Activated naive CD4-positive, alpha-beta T cell treated with anti-CD3 and anti-CD28 coated beads for 36 hours (primary cell): ENCODE measurements at regions of chr19 and their contacts with region 1.

Region 1: GRCh38 chr19:55339048-55339888 is at the start of gene KMT5C:
- DNase-seq: peak; percentile 100
- H3K4me3 Mint-ChIP-seq: peak within 1 kb of the TSS; percentile 90
- H3K27ac Mint-ChIP-seq: peak within 1 kb of the TSS; percentile 92
- H3K4me1 Mint-ChIP-seq: peaks cover 12% of the 10 kb centered on the region
- H3K27me3 Mint-ChIP-seq: no peaks in the 10 kb centered on the region
- total RNA-seq, gene KMT5C: 45.9 to 47.1 TPM

Region 2: GRCh38 chr19:55062734-55063492 is 276.4 kb before region 1 on chr19 and contains the start of gene RDH13:
- CTCF ChIA-PET with region 1: no interaction called
- intact Hi-C with region 1: loop called (anchors 1 kb)
- DNase-seq: peak; percentile 99
- H3K4me3 Mint-ChIP-seq: peak within 1 kb of the TSS; percentile 84
- H3K27ac Mint-ChIP-seq: no peak within 1 kb of the TSS
- H3K4me1 Mint-ChIP-seq: peaks cover 18% of the 10 kb centered on the region
- H3K27me3 Mint-ChIP-seq: peaks cover 24% of the 10 kb centered on the region
- total RNA-seq, gene RDH13: 8.7 to 8.9 TPM

Region 3: DNA sequence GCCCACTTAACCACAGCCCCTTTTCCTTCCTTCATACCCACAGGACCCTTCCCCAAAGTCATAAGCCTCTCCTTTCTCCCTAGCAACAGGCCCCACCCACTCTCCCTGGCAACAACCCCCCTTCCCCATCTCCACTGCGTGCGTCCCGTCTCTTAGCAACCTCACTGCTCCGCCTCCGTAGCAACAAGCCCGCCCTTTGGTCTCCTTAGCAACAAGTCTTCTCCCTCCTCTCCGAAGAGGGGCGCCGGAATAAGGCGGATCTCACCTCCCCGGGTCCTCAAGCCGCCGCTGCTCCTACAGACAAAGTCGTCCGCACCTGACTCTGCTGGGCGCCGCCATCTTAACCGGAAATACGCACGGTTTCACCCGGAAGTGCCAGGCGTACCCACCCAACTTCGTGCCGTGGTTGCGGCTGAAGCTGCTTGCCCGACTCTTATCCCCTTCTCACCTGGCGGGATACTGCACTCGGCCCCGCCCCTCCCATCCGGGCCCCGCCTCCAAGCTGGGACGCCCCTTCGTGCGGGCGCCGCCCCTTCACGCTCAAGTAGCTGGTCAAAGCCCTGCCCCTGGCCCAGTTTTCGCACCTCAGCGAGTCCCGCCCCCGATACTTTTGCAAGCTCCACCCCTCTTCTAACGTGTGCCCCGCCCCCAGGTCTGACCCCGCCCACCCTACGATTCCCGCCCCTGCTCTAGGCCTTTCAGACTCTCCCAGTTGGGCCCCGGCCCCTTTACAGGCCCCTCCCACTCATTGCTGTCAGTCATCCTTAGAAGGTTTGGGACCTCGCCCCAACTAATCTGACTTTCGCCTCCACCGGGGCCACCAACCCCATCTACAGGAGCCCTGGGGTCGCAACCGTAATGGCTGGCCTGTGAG is 59.3 kb before region 1 on chr19 and contains the start of gene HSPBP1:
- CTCF ChIA-PET with region 1: interaction called, 3 read pairs
- intact Hi-C with region 1: loop called (anchors 1 kb)
- DNase-seq: peak; percentile 97
- H3K4me3 Mint-ChIP-seq: peak within 1 kb of the TSS; percentile 100
- H3K27ac Mint-ChIP-seq: peak within 1 kb of the TSS; percentile 93
- H3K4me1 Mint-ChIP-seq: peaks cover 28% of the 10 kb centered on the region
- H3K27me3 Mint-ChIP-seq: no peaks in the 10 kb centered on the region
- total RNA-seq, gene HSPBP1: 44.3 to 45.0 TPM

Region 4: DNA sequence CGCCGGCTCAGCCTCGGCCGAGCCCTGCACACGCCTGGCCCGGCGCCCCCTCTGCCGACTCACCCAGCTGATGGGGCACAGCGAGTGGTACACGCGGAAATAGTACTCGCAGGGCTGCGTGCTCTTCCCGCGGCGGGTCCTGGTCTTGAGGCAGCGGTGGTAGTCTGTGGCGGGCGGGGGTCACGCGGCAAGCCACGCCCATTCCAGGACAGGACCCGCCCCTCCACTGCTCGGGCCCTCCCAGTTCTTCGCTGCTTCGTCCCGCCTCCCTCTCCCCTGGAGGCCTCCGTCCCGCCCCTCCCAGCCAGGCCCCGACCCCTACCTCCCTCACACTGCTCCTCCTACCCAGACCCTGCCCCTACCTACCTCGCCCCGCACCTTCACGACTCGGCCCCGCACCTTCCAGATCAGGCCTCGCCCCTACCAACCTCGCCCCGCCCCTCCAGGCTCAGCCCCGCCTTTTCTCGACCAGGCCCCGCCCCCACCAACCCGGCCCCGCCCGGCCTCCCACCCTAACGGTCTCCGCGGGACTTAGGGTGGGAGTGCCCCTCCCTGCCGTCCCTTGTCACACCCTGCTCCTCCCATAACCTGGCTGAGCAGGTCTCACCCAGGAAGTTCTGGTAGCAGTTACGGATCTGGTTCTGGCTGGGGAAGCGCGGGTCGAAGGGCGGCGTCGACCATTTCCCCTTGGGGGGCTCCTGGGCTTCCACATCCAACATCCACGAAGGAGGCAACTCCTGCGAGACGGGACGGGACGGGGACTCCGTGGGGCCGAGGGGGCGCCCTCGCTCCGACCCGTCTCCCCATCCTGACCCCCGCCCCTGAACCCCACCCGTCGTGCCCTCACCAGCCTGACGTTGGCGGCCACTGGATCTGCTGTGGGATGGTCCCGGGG is 14.8 kb after region 1 on chr19:
- CTCF ChIA-PET with region 1: interaction called, 3 read pairs
- intact Hi-C with region 1: loop called (anchors 1 kb)
- DNase-seq: peak; percentile 76
- H3K4me3 Mint-ChIP-seq: peak overlapping the region; percentile 73
- H3K27ac Mint-ChIP-seq: no peak overlapping the region
- H3K4me1 Mint-ChIP-seq: peaks cover 15% of the 10 kb centered on the region
- H3K27me3 Mint-ChIP-seq: peaks cover 49% of the 10 kb centered on the region

Region 5: DNA sequence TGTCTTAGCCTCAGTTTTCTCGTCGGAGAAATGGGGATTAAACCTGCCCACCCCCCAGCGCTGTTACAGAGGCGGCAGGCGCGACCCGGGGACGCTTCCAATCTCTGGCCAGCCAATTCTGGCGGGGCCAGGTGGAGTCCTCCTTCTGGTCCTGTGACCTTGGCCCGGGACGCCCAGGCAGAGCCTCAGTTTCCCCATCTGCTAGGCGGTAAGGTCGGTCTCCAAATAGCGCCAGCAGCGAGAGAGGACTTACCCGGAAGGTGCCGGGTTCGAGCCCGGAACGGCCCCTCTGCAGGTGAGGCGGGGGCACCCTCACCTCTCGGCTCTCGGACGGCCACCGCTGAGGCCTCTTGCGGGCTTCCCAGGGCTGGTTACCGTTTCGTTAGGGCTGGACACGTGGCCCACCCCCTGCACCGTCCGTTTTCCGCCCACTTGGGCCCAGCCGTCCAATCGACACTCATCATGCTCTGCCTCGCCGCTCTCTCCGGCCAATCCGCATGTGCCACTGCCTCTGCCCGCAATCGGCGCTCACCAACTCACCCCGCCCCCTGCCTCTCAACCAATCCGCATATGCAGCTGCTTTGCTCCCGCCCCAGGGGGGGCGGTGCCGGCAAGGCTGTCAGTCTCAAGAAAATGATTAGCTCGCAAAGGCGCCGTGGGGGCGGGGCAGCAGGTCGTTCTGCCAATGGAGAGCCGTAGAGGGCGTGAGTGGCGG is 122.1 kb after region 1 on chr19 and contains the start of gene ISOC2:
- CTCF ChIA-PET with region 1: no interaction called
- intact Hi-C with region 1: loop called (anchors 1 kb)
- DNase-seq: peak; percentile 100
- H3K4me3 Mint-ChIP-seq: peak within 1 kb of the TSS; percentile 93
- H3K27ac Mint-ChIP-seq: peak within 1 kb of the TSS; percentile 77
- H3K4me1 Mint-ChIP-seq: peaks cover 20% of the 10 kb centered on the region
- H3K27me3 Mint-ChIP-seq: no peaks in the 10 kb centered on the region
- total RNA-seq, gene ISOC2: 18.6 to 20.5 TPM

Region 6: DNA sequence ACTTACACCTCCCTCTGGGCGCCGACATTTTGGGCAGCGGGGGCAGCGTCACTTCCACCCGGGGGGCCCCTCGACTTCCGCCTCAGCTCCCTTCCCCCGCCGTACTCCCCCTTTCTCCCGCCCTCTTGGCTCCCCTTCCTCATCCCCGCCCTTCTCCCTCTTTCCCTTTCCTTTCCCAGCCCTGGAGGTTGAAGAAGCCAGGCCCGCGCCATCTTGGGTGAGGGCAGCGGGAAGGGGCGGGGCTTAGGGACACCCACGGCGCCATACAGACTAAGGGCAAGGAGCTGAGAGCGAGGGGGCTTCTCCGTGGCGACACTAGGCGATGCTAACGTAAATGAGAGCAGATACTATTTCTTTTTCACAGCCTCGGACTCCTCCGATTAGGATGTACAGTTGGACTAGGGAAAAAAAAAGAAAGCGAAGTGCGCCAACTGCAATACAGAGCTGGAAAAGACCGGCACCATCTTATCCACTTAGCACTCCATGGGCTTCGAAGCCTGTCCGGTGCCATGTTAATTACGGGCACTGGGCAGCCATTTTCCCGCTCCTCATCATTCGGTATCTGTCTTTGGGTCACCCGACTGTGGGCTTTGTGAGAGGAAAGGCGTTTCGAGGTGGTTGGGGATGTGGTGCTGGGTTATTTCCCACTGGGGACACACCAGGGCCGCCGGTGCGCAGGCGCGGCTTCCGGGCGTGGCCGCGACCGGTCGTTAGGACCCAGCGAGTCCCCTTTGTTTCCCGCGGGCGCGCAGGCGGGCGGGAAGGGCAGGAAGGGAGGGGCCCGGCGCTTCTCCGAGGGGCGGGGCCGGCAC is 260.4 kb after region 1 on chr19 and contains the start of gene FIZ1:
- CTCF ChIA-PET with region 1: no interaction called
- intact Hi-C with region 1: loop called (anchors 1 kb)
- DNase-seq: peak; percentile 98
- H3K4me3 Mint-ChIP-seq: peak within 1 kb of the TSS; percentile 88
- H3K27ac Mint-ChIP-seq: peak within 1 kb of the TSS; percentile 99
- H3K4me1 Mint-ChIP-seq: peaks cover 31% of the 10 kb centered on the region
- H3K27me3 Mint-ChIP-seq: no peaks in the 10 kb centered on the region
- total RNA-seq, gene FIZ1: 12.8 to 14.8 TPM